T-cell (primary cell): ENCODE measurements at regions of chr6 and their contacts with region 1.

Region 1: DNA sequence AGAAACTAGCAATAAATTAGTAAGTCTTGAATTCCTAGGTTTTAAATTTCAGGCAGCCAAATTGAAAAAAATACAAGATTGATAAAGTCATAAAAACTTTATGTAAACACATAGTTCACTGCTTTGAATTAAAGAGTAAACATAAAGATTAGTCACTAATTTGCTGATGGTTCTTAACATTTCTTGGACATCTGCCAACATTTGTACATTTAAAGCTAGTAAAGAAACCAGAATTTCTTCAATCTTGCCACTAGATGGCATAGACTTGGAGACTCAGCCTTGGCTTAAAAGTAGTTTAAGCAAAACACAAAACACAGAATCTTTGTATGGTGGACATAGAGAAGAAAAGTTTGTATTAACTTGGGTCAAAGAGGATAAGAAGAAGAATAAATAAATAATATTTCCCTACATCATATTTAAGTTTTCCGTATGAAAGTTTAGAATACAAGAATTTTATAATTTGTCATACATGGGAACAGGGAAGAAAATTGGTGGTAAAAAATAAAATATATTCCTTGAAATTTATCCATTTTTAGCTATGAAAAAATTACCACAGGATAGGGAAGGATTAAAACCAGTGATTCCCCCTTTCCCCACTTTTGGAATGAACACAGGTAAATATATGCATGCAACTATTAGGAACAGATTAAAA is 41.7 kb upstream of the FAM135A start:
- DNase-seq: peak in 1 of 35 experiments; percentile 67
- ATAC-seq: peak in 2 of 4 experiments; percentile 52
- H3K4me3 ChIP-seq: no peak overlapping the region
- H3K4me3 Mint-ChIP-seq: no peak overlapping the region
- H3K27ac ChIP-seq: no peak overlapping the region
- H3K27ac Mint-ChIP-seq: no peak overlapping the region
- H3K4me1 ChIP-seq: no peaks in the 10 kb centered on the region
- H3K4me1 Mint-ChIP-seq: no peaks in the 10 kb centered on the region
- H3K27me3 ChIP-seq: peaks cover 0 to 3% of the 10 kb centered on the region in 2 experiments
- H3K27me3 Mint-ChIP-seq: peaks cover 17 to 21% of the 10 kb centered on the region in 2 donors

Region 2: GRCh38 chr6:70094156-70094555 is 277.4 kb before region 1 on chr6:
- CTCF ChIA-PET with region 1: no interaction called
- POLR2A ChIA-PET with region 1: no interaction called
- DNase-seq: no peak
- ATAC-seq: no peak
- H3K4me3 ChIP-seq: no peak overlapping the region
- H3K4me3 Mint-ChIP-seq: no peak overlapping the region
- H3K27ac ChIP-seq: no peak overlapping the region
- H3K27ac Mint-ChIP-seq: no peak overlapping the region
- H3K4me1 ChIP-seq: no peaks in the 10 kb centered on the region
- H3K4me1 Mint-ChIP-seq: no peaks in the 10 kb centered on the region
- H3K27me3 ChIP-seq: no peaks in the 10 kb centered on the region
- H3K27me3 Mint-ChIP-seq: peaks cover 0 to 4% of the 10 kb centered on the region in 2 donors

Region 3: DNA sequence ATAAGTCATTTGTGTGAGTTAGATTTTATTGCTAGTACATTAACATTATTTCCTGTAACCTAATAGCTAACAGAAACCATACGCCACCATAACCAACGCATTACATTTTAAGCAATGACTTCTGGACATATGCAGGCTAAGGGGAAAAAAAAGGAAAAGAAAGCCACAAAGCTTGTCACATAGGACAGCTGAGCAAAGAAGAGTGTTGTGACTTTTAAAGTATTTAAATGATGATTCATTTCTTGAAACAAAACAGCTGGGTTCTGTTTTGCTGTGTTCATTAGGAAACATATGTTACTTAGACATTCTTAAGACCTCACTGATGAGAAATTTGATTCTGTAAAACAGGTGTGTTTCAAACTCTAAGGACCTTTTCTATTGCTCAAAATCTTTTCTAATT is 240.1 kb before region 1 on chr6:
- CTCF ChIA-PET with region 1: no interaction called
- POLR2A ChIA-PET with region 1: no interaction called
- DNase-seq: no peak
- ATAC-seq: no peak
- H3K4me3 ChIP-seq: no peak overlapping the region
- H3K4me3 Mint-ChIP-seq: no peak overlapping the region
- H3K27ac ChIP-seq: no peak overlapping the region
- H3K27ac Mint-ChIP-seq: no peak overlapping the region
- H3K4me1 ChIP-seq: no peaks in the 10 kb centered on the region
- H3K4me1 Mint-ChIP-seq: no peaks in the 10 kb centered on the region
- H3K27me3 ChIP-seq: peaks cover 0 to 3% of the 10 kb centered on the region in 2 experiments
- H3K27me3 Mint-ChIP-seq: no peaks in the 10 kb centered on the region

Region 4: DNA sequence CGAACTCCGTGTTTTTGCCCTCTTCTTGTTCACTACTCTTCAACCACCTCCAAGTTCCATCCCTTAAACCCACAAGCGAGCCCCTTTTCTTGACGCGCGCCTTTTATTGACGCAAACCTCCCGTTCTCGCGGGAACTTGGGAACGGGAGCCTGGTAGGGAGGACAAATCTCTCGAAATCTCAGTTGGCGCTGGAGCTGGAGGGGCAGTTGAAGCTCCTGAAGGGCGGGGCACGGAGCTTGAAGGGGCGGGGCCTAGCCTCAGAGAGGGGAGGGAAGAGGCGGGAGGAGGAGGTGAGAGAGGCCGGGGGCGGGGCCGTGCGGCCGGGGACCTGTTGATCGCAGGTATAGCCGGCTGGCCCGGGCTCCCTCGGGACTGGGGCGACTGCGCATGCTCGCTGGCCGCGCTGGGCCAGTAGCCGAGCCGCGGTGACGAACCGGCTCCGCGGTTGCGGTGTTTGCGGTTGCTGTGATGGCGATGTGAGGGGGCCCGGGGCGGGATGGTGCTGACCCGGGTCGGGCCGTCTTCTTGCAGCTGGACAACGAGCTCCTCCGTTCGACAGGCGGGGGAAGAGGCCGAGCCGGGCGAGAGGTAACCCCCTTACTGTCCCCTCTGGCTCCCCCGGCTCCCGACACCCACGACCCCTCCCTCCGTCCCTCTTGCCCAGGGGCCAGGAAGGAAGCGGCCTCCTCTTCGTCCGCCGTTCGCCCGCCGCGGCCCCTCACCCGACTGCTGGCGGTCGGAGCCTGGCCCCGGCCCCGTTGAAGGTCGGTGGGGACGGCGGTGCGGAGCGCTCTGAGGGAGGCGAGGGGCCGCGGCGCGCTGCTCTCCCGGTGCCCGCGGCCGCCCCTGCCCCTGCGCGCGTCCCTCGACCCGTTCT is 41.8 kb after region 1 on chr6 and contains the start of gene FAM135A:
- CTCF ChIA-PET with region 1: interaction called in 1 of 2 experiments, 11 read pairs
- POLR2A ChIA-PET with region 1: interaction called in 1 of 2 experiments, 3 read pairs
- DNase-seq: peak; percentile 80 to 94 (median 86)
- ATAC-seq: peak; percentile 90 to 96 (median 96)
- H3K4me3 ChIP-seq: peak within 1 kb of the TSS; percentile 86 to 87
- H3K4me3 Mint-ChIP-seq: peak within 1 kb of the TSS; percentile 87 to 96 (median 95)
- H3K27ac ChIP-seq: peak within 1 kb of the TSS; percentile 63
- H3K27ac Mint-ChIP-seq: peak within 1 kb of the TSS; percentile 80 to 87
- H3K4me1 ChIP-seq: peaks cover 4 to 9% of the 10 kb centered on the region in 2 experiments
- H3K4me1 Mint-ChIP-seq: peaks cover 22 to 26% (median 23%) of the 10 kb centered on the region in 3 donors
- H3K27me3 ChIP-seq: no peaks in the 10 kb centered on the region
- H3K27me3 Mint-ChIP-seq: no peaks in the 10 kb centered on the region
- total RNA-seq, gene FAM135A: 6.4 to 8.4 (median 7.6) TPM

Region 5: DNA sequence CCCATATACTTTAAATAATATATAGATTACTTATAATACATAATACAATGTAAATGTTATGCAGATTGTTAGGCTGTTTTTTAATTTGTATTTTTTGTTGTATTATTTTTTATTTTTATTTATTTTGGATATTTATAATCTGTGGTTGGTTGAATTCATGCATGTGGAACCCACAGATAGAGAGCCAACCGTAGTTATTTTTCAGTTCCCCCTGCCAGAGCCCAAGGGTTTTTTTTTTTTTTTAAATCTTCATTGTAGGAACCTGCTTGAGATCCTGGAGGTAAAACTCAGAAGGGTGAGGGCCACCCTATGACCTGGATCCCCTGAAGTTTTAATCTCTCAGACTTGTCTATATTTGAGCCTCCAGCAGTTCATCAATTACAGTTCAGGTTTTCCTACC is 452.1 kb after region 1 on chr6:
- CTCF ChIA-PET with region 1: interaction called in 1 of 2 experiments, 11 read pairs
- POLR2A ChIA-PET with region 1: no interaction called
- DNase-seq: no peak
- ATAC-seq: no peak
- H3K4me3 ChIP-seq: no peak overlapping the region
- H3K4me3 Mint-ChIP-seq: no peak overlapping the region
- H3K27ac ChIP-seq: no peak overlapping the region
- H3K27ac Mint-ChIP-seq: no peak overlapping the region
- H3K4me1 ChIP-seq: no peaks in the 10 kb centered on the region
- H3K4me1 Mint-ChIP-seq: peaks cover 0 to 9% (median 8%) of the 10 kb centered on the region in 3 donors
- H3K27me3 ChIP-seq: no peaks in the 10 kb centered on the region
- H3K27me3 Mint-ChIP-seq: no peaks in the 10 kb centered on the region